ENCODE measurements at regions of chr9 and their contacts with region 1.

Region 1: DNA sequence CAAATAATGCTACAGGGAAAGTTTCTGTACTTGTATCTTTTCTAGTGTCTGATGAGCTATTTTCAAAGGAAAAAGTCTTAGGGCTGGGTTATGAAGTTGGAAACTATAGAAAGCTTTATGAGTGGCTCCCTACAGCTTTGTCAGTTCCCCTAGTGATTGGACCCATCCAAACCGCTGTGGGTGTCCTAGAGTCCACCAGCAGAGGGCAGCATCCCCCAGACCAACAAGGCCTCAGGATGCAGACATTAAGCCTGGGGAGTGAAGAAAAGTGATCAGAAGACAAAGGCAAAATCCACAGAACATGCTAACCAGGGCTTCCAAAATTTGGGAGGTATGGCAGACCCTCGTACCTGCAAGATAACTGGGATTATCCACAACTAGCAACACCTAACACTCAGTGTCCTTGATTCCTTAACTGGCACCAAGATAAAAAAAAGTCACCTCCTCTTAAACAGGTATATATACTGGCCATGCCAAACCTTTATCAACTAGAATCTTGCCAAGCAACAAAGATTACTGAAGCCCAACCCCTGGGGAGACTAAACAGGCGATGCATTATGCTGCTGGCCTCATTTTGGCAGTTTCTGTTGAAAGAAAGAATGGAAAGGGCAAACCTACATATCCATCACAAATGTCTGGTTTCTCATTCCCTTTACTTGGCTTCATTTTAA is 110.4 kb upstream of the NR5A1 start:
- DNase-seq: peak; percentile 72
- CTCF ChIP-seq: peak; percentile 90

Region 2: GRCh38 chr9:124381170-124381945 is 236.2 kb before region 1 on chr9:
- CTCF ChIA-PET with region 1: no interaction called
- POLR2A ChIA-PET with region 1: no interaction called
- DNase-seq: no peak
- CTCF ChIP-seq: no peak

Region 3: GRCh38 chr9:124423591-124423990 is 194.0 kb before region 1 on chr9:
- CTCF ChIA-PET with region 1: no interaction called
- POLR2A ChIA-PET with region 1: no interaction called
- DNase-seq: no peak
- CTCF ChIP-seq: no peak

Region 4: GRCh38 chr9:124593651-124594058 is 24.0 kb before region 1 on chr9:
- CTCF ChIA-PET with region 1: interaction called, 71 read pairs
- POLR2A ChIA-PET with region 1: no interaction called
- DNase-seq: no peak
- CTCF ChIP-seq: no peak

Region 5: DNA sequence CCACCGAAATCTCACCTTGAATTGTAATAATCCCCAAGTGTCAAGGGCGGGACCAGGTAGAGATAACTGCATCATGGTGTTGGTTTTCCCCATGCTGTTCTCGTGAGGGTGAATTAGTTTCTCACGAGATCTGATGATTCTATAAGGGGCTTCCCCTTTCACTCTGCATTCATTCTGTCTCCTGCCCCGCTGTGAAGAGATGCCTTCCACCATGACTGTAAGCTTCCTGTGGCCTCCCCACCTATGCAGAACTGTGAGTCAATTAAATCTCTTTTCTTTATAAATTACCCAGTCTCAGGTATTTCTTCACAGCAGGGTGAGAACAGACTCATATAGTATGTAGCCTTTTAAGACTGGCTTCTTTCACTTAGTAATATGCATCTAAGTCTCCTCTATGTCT is 17.7 kb after region 1 on chr9:
- CTCF ChIA-PET with region 1: interaction called, 123 read pairs
- POLR2A ChIA-PET with region 1: no interaction called
- DNase-seq: no peak
- CTCF ChIP-seq: no peak

Region 6: GRCh38 chr9:124675261-124676158 is 57.9 kb after region 1 on chr9:
- CTCF ChIA-PET with region 1: interaction called, 10 read pairs
- POLR2A ChIA-PET with region 1: no interaction called
- DNase-seq: no peak
- CTCF ChIP-seq: no peak

Region 7: GRCh38 chr9:124721109-124721906 is 103.7 kb after region 1 on chr9:
- CTCF ChIA-PET with region 1: interaction called, 23 read pairs
- POLR2A ChIA-PET with region 1: no interaction called
- DNase-seq: no peak
- CTCF ChIP-seq: no peak